ENCODE measurements at regions of chr7 and their contacts with region 1.

Region 1: DNA sequence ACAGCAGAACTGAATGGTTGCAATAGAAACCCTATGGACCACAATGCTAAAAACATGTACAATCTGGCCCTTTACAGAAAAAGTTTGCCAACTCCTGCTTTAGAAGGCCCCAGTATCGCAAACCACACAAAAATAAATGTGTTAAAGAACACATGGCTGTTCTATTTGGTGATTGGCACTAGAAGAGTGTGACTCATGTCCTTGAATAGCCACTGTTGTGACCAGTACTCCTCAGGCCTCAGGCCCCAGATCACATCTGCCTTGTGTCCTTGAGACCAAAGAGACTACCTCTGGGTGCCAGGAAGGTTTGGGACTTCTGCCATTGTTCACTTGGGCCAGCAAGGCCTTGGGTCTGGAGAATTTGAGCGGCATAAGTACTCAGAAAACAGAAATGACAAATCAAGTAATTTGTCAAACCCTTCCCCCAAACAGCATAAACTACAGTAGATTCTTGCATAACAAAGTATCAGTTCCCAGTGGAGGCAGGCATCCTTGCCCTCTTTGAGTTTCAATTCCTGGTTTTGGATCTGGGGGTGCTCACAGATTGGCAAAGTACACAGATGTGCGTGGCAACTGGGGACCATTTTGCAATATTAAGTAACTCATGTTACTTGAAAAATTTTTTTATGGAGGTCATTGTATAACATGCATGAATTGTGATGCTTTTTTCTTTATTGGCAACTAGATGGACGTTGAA is 50.2 kb downstream of the MTURN start:
- DNase-seq: no peak
- H3K4me3 ChIP-seq: no peak overlapping the region
- H3K27ac ChIP-seq: no peak overlapping the region
- H3K4me1 ChIP-seq: peaks cover 0 to 4% (median 0%) of the 10 kb centered on the region in 4 experiments; a peak in 2 of 7 replicates
- H3K27me3 ChIP-seq: no peaks in the 10 kb centered on the region
- CTCF ChIP-seq: no peak
- EP300 ChIP-seq: no peak
- POLR2A ChIP-seq: no peak
- RAD21 ChIP-seq: no peak

Region 2: GRCh38 chr7:30173058-30173897 is 11.7 kb before region 1 on chr7:
- CTCF ChIA-PET with region 1: interaction called, 22 read pairs
- POLR2A ChIA-PET with region 1: interaction called, 3 read pairs
- DNase-seq: no peak
- H3K4me3 ChIP-seq: no peak overlapping the region
- H3K27ac ChIP-seq: no peak overlapping the region
- H3K4me1 ChIP-seq: peaks cover 8 to 18% (median 16%) of the 10 kb centered on the region in 4 experiments
- H3K27me3 ChIP-seq: peaks cover 0 to 3% (median 1%) of the 10 kb centered on the region in 4 experiments; a peak in 3 of 7 replicates
- CTCF ChIP-seq: peak in 2 of 3 experiments; percentile 12 to 25; a peak in 2 of 4 replicates
- EP300 ChIP-seq: no peak
- POLR2A ChIP-seq: no peak
- RAD21 ChIP-seq: peak; percentile 31 to 55; a peak in 3 of 4 replicates

Region 3: DNA sequence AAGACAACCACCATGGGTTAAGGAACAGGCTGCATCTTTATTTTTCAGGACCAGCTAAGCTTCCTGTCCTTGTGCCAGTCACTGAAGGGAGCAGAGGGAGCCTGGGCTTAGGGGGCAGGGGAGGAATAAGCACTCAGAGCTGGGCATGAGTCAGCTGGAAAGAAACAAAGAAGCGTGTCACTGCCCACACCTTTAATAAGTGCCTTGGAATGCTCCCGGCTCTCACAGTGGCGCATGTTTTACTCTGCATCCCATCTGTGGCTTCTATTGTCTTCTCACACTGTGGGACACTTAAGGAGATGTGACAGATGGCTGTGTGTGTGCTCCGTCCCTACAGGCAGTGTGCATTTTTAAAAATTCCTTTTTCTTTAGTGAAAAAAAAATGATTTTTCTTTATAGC is 21.6 kb after region 1 on chr7:
- CTCF ChIA-PET with region 1: no interaction called
- POLR2A ChIA-PET with region 1: no interaction called
- DNase-seq: no peak
- H3K4me3 ChIP-seq: no peak overlapping the region
- H3K27ac ChIP-seq: no peak overlapping the region
- H3K4me1 ChIP-seq: no peaks in the 10 kb centered on the region
- H3K27me3 ChIP-seq: no peaks in the 10 kb centered on the region
- CTCF ChIP-seq: no peak
- EP300 ChIP-seq: no peak
- POLR2A ChIP-seq: no peak
- RAD21 ChIP-seq: no peak

Region 4: DNA sequence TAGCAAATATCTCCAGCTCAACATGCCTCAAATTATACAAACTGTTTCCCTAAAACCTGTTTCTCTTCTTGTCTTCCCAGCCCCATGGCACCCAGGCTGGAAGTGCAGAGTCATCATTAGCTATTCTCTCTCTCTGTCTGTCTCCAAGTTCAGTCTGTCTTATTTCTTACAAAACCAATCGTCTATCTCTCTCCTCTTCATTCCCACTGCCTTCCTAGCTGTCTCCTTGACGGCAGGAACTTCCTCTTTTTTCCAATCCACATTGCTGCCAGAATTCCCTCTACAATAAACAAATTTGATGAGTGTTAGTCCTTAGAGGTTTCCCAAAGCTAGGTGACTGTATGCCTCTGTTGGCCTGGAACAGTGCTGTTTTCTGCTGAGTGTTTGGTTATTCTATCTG is 84.6 kb after region 1 on chr7:
- CTCF ChIA-PET with region 1: no interaction called
- POLR2A ChIA-PET with region 1: no interaction called
- DNase-seq: peak in 1 of 2 experiments; percentile 17
- H3K4me3 ChIP-seq: no peak overlapping the region
- H3K27ac ChIP-seq: no peak overlapping the region
- H3K4me1 ChIP-seq: no peaks in the 10 kb centered on the region
- H3K27me3 ChIP-seq: no peaks in the 10 kb centered on the region
- CTCF ChIP-seq: no peak
- EP300 ChIP-seq: no peak
- POLR2A ChIP-seq: no peak
- RAD21 ChIP-seq: no peak